A673 (cell line): ENCODE measurements at regions of chr2 and their contacts with region 1.

Region 1: DNA sequence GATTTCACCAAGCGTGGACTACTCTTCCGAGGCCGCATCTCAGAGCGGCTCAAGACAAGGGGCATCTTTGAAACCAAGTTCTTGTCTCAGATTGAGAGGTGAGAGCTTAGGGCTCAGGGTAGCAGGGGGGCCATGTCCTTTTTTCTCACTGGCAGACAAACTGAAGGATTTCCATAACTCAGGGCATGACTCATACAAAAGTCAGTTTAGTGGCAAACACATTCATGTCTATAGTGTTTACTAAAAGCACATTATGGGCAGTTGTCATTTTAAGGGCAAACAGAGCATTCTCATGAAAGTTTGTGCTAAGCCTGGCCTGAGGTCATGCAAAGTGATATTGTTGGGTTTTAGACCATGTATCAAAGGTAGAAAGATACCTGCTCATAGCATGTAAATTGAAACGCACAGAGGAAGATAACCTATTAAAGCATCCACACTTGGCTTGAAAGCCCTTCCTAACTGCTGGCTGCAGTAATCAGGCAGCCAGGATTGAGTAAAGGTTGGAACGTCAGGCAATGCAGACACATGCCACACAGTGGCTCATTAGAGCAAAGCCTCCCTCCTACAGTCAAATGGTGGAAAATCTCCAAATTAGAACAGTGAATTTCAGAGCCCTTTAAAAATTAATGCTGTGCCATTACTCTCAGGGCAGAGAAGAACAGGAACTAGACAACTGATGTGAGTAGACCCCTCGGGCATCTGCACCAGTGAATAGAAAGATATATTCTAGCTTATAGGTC is 54.2 kb downstream of the HK2 start:
- DNase-seq: no peak
- H3K4me3 ChIP-seq: no peak overlapping the region
- H3K27ac ChIP-seq: no peak overlapping the region
- H3K4me1 ChIP-seq: no peaks in the 10 kb centered on the region
- H3K27me3 ChIP-seq: no peaks in the 10 kb centered on the region
- CTCF ChIP-seq: no peak

Region 2: DNA sequence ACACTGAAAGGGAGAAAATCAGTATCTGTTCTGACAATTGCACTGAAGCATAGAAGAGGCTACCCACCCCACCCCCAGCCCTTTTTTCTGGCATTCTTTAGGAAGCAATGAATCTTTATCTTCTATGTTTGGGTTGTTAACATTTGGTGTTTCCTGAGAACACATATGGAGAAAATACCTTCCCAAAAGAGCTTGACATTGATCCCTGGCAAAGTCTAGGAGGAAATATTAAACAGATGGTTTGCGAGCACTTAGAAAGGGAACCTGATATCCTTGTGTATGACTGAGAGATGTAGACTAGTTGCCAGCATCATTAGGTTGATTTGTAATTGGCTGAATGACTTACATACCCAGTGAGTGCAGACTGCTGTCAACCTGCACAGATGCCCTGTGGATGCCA is 290.7 kb before region 1 on chr2:
- CTCF ChIA-PET with region 1: interaction called, 12 read pairs
- POLR2A ChIA-PET with region 1: no interaction called
- intact Hi-C with region 1: no loop called
- DNase-seq: no peak
- H3K4me3 ChIP-seq: no peak overlapping the region
- H3K27ac ChIP-seq: no peak overlapping the region
- H3K4me1 ChIP-seq: no peaks in the 10 kb centered on the region
- H3K27me3 ChIP-seq: peaks cover 7% of the 10 kb centered on the region
- CTCF ChIP-seq: no peak